HAP-1 (cell line): ENCODE measurements at regions of chr3 and their contacts with region 1.

Region 1: DNA sequence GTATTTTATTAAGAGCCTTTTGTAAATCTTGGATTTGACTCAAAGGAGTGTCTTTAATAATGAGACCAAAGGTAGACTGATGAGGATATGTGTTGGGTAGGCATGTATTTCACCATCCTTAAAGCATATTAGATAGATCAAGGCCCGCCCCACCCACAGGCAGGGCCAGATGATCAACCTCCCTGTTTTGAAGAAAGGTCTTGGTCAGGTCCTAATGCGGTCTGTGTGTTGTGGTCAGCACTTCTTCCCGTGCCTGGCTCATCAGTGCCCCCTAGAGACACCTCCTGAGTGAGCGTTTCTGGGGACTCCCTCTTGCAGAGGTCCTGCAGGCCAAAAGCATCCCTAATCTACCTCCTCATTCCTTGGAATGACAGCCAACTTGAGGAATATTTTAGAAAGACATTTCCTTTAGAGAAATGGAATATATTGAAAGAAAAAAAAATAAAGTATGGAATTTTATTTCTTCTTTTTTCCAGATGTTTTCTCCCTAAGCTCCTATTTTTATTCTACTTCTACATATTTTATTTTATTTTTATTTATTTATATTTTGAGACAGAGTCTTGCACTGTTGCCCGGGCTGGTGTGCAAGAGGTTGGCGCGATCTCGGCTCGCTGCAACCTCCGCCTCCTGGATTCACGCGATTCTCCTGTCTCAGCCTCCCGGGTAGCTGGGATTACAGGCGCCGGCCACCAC is 6.0 kb downstream of the TM4SF4 start:
- DNase-seq: peak; percentile 78 to 91
- H3K4me3 ChIP-seq: no peak overlapping the region
- H3K4me1 ChIP-seq: no peaks in the 10 kb centered on the region; the same call in 1 of the 2 replicates
- H3K27me3 ChIP-seq: no peaks in the 10 kb centered on the region

Region 2: GRCh38 chr3:148615385-148615784 is 865.1 kb before region 1 on chr3:
- in situ Hi-C with region 1: no loop called
- DNase-seq: no peak
- H3K4me3 ChIP-seq: no peak overlapping the region
- H3K4me1 ChIP-seq: no peaks in the 10 kb centered on the region
- H3K27me3 ChIP-seq: no peaks in the 10 kb centered on the region; the same call in 1 of the 2 replicates

Region 3: GRCh38 chr3:148955544-148956346 is 524.7 kb before region 1 on chr3:
- in situ Hi-C with region 1: loop called (anchors 25 kb)
- DNase-seq: peak; percentile 54 to 71
- H3K4me3 ChIP-seq: no peak overlapping the region
- H3K4me1 ChIP-seq: 0 out of 2 replicates have a peak, but pooled peaks cover 3% of the 10 kb centered on the region
- H3K27me3 ChIP-seq: 0 out of 2 replicates have a peak, but pooled peaks cover 3% of the 10 kb centered on the region

Region 4: DNA sequence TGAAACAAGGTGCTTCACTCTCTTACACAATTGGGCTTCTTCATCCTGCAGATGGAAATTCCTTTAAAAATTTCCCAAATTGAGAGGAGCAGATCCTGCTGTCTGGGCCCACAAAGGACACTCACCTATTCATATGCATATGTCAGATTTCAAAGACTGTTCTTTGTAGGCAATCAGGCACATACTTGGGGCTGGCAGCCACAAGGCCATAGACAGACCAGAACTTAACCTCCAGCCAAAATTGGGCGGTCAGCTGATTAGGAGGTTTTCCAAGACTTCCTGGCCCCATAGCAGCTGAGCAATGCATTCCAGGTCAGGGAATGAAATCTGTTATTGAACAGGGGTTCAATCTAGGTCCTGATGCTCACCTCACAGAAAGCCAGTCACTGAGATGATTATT is 366.0 kb before region 1 on chr3:
- in situ Hi-C with region 1: loop called (anchors 10 kb)
- DNase-seq: peak; percentile 51 to 57
- H3K4me3 ChIP-seq: no peak overlapping the region
- H3K4me1 ChIP-seq: peaks cover 9% of the 10 kb centered on the region; the same call in 1 of the 2 replicates
- H3K27me3 ChIP-seq: no peaks in the 10 kb centered on the region

Region 5: DNA sequence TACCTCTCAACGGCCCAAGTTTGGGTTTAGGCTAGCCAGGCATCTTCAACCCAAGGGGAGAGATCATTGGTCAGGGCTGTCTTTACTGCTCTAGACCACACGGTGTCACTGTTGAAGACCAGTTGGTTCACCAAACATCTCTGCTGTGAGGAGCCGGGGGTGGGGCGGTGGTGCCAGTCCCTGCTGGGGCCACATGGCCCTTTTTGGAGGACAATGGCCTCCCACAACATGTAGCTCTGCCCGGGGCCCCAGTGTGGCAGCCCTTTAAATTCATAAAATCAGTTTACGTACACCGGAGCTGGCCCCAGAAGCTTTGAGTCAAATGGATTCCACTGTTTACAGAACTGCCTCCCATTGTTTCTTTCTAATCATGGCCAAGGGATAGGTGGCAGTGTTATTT is 127.9 kb before region 1 on chr3:
- in situ Hi-C with region 1: loop called (anchors 5 kb)
- DNase-seq: peak; percentile 56 to 84
- H3K4me3 ChIP-seq: no peak overlapping the region
- H3K4me1 ChIP-seq: no peaks in the 10 kb centered on the region; the same call in 1 of the 2 replicates
- H3K27me3 ChIP-seq: no peaks in the 10 kb centered on the region

Region 6: DNA sequence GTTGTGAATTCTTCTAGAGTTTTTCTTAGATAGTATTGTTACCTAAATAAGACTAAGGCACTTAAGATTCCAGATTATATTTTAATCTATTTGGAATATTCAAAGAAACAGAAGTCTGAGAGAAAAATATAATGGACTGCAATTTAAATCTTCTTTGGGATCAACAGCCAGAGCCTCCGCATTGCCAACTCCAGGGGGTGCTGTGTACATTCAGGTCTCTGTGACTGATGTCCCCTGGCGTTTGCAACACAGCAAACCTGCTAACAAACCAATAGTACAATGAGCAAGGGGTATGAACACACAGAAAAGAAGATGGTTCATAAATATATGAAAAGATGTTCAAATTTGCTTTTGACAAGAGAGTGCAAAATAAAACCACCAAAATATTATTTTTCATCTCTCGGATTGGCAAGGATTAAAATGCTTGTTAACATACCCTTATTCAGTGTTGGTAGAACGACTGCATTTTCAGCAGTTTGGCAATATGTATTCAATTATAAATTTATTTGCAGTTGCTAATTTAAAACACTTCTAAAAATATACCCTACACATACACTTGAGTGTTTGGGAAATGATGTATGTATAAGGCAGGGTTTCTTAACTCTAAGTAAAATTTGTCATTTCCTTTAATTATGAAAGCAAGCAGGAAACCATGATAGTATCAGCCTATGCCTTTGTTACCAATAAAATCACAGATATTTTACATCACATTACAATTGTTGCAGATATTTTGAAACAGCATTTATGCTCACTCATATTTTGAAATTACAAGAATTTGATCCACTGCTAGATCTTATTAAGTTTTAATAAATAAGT is 86.9 kb before region 1 on chr3:
- in situ Hi-C with region 1: loop called (anchors 10 kb)
- DNase-seq: peak; percentile 64 to 83
- H3K4me3 ChIP-seq: no peak overlapping the region
- H3K4me1 ChIP-seq: no peaks in the 10 kb centered on the region
- H3K27me3 ChIP-seq: no peaks in the 10 kb centered on the region

Region 7: DNA sequence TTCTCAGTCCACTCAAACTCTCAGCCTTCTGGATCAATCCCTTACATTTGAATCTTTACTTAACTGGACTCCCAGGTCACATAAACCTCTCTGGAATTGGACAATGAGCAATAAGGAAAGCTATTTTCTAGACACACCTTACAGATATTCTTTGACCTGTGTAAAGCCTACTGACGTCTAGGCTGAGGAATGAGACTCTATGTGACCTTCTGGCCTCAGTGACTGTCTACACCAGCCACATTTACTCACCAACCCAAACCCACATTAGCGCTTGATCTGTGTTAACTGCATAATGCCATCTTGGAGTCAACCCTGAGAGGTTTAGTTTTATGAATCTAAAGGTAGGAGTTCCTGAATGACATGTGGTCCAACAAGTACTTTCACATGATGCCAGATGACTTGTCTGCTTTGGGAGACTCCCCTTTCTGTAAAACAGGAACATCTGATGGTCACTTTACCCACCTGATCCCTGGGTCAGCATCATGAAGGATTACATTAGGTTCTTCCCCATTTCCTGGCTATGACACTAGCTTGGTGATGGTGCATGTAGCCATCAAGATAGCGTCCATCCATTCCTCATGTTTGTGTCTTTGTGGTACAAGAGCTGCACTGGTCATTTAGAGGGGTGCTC is 283.2 kb after region 1 on chr3:
- in situ Hi-C with region 1: no loop called
- DNase-seq: no peak
- H3K4me3 ChIP-seq: no peak overlapping the region
- H3K4me1 ChIP-seq: no peaks in the 10 kb centered on the region
- H3K27me3 ChIP-seq: no peaks in the 10 kb centered on the region

Region 8: GRCh38 chr3:150216041-150216811 is 735.8 kb after region 1 on chr3:
- in situ Hi-C with region 1: loop called (anchors 25 kb)
- DNase-seq: peak; percentile 74
- H3K4me3 ChIP-seq: no peak overlapping the region
- H3K4me1 ChIP-seq: peaks cover 21% of the 10 kb centered on the region
- H3K27me3 ChIP-seq: no peaks in the 10 kb centered on the region